HepG2 (cell line): ENCODE measurements at regions of chr14 and their contacts with region 1.

Region 1: GRCh38 chr14:77023001-77023996 is 5.2 kb downstream of the IRF2BPL start:
- DNase-seq: peak; percentile 97
- ATAC-seq: peak; percentile 92
- H3K4me3 ChIP-seq: peak overlapping the region; percentile 38 to 85 (median 61); a peak in 5 of 6 replicates
- H3K27ac ChIP-seq: peak overlapping the region; percentile 84
- H3K4me1 ChIP-seq: peaks cover 67% of the 10 kb centered on the region
- H3K27me3 ChIP-seq: no peaks in the 10 kb centered on the region
- CTCF ChIP-seq: peak; percentile 54
- EP300 ChIP-seq: peak in 1 of 2 experiments; percentile 70; a peak in 3 of 4 replicates
- POLR2A ChIP-seq: peak; percentile 32 to 34; a peak in 2 of 4 replicates
- RAD21 ChIP-seq: peak; percentile 76

Region 2: DNA sequence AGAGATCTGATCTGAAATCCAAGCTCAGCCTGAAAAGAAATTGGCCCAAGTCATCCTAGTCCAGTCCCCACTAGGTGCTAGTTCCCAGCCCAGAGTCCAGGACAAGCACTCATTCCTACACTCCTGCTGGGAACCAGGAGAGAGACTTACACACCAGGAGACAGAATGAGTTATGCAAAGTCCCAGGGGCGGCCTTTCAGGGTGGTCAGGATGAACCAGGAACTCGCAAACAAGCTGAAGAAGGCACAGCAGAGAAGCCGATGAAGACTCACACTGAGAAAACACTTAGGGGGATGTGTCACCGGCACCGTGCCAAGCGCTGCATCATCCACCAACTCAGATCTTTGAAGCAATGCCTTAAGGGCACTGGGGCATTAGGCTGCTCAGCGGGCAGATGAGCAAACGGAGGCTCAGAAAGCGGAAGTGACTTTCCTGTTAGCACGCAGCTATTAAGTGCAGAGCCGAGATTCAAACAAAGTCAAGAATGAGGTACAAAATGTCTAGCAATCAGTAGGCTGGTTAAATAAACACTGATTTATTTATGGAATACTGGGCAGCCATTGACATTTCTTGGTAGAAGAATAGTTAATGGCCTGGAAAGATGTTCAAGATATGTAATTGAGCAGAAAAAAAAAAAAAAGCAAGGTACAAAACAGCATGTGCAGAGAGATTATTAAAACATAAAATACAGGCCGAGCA is 118.4 kb before region 1 on chr14:
- CTCF ChIA-PET with region 1: no interaction called
- POLR2A ChIA-PET with region 1: no interaction called
- in situ Hi-C with region 1: no loop called
- intact Hi-C with region 1: no loop called
- DNase-seq: peak; percentile 10
- ATAC-seq: peak; percentile 43
- H3K4me3 ChIP-seq: no peak overlapping the region
- H3K27ac ChIP-seq: no peak overlapping the region
- H3K4me1 ChIP-seq: 0 out of 2 replicates have a peak, but pooled peaks cover 9% of the 10 kb centered on the region
- H3K27me3 ChIP-seq: peaks cover 3 to 19% of the 10 kb centered on the region in 2 experiments; a peak in 3 of 5 replicates
- CTCF ChIP-seq: no peak
- EP300 ChIP-seq: no peak
- POLR2A ChIP-seq: no peak
- RAD21 ChIP-seq: no peak

Region 3: GRCh38 chr14:76956316-76957090 is 66.8 kb before region 1 on chr14:
- CTCF ChIA-PET with region 1: no interaction called
- POLR2A ChIA-PET with region 1: interaction called, 16 read pairs
- in situ Hi-C with region 1: no loop called
- intact Hi-C with region 1: no loop called
- DNase-seq: peak; percentile 89
- ATAC-seq: peak; percentile 74
- H3K4me3 ChIP-seq: peak overlapping the region; percentile 53 to 77 (median 56)
- H3K27ac ChIP-seq: peak overlapping the region; percentile 78
- H3K4me1 ChIP-seq: peaks cover 89% of the 10 kb centered on the region
- H3K27me3 ChIP-seq: no peaks in the 10 kb centered on the region
- CTCF ChIP-seq: peak; percentile 37
- EP300 ChIP-seq: peak in 1 of 2 experiments; percentile 47; a peak in 1 of 4 replicates
- POLR2A ChIP-seq: peak; percentile 40 to 51; a peak in 3 of 4 replicates
- RAD21 ChIP-seq: 0 out of 2 replicates have a peak, but pooled peaks have one; percentile 44

Region 4: DNA sequence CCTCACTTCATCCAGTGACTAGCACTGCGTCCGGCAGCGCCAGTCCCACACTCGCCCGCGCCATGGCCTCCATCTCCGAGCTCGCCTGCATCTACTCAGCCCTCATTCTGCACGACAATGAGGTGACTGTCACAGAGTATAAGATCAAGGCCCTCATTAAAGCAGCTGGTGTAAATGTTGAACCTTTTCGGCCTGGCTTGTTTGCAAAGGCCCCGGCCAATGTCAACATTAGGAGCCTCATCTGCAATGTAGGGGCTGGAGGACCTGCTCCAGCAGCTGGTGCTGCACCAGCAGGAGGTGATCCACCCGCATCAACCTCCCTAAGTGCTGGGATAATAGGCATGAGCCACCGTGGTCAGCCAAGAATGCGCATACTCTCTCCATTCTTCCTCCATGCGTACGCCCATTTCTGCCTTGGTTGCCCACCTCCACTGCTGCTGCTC is 54.7 kb before region 1 on chr14:
- CTCF ChIA-PET with region 1: no interaction called
- POLR2A ChIA-PET with region 1: interaction called, 9 read pairs
- in situ Hi-C with region 1: no loop called
- intact Hi-C with region 1: loop called (anchors 2 kb)
- DNase-seq: peak; percentile 92
- ATAC-seq: peak; percentile 94
- H3K4me3 ChIP-seq: peak overlapping the region in 1 of 3 experiments; percentile 50; a peak in 4 of 6 replicates
- H3K27ac ChIP-seq: peak overlapping the region; percentile 61
- H3K4me1 ChIP-seq: peaks cover 76% of the 10 kb centered on the region
- H3K27me3 ChIP-seq: no peaks in the 10 kb centered on the region
- CTCF ChIP-seq: peak; percentile 85
- EP300 ChIP-seq: peak in 1 of 2 experiments; percentile 68; a peak in 1 of 4 replicates
- POLR2A ChIP-seq: no peak
- RAD21 ChIP-seq: peak; percentile 86

Region 5: GRCh38 chr14:77040059-77040740 is 16.9 kb after region 1 on chr14:
- CTCF ChIA-PET with region 1: no interaction called
- POLR2A ChIA-PET with region 1: interaction called, 85 read pairs
- in situ Hi-C with region 1: no loop called
- intact Hi-C with region 1: loop called (anchors 2 kb)
- DNase-seq: peak; percentile 99
- ATAC-seq: peak; percentile 85
- H3K4me3 ChIP-seq: peak overlapping the region; percentile 40 to 67 (median 58)
- H3K27ac ChIP-seq: peak overlapping the region; percentile 84
- H3K4me1 ChIP-seq: peaks cover 89% of the 10 kb centered on the region
- H3K27me3 ChIP-seq: no peaks in the 10 kb centered on the region
- CTCF ChIP-seq: no peak; the same call in 1 of the 2 replicates
- EP300 ChIP-seq: peak; percentile 47 to 68; a peak in 3 of 4 replicates
- POLR2A ChIP-seq: peak; percentile 33 to 45; a peak in 2 of 4 replicates
- RAD21 ChIP-seq: no peak; the same call in 1 of the 2 replicates